A549 (cell line): ENCODE measurements at regions of chr17 and their contacts with region 1.

Region 1: DNA sequence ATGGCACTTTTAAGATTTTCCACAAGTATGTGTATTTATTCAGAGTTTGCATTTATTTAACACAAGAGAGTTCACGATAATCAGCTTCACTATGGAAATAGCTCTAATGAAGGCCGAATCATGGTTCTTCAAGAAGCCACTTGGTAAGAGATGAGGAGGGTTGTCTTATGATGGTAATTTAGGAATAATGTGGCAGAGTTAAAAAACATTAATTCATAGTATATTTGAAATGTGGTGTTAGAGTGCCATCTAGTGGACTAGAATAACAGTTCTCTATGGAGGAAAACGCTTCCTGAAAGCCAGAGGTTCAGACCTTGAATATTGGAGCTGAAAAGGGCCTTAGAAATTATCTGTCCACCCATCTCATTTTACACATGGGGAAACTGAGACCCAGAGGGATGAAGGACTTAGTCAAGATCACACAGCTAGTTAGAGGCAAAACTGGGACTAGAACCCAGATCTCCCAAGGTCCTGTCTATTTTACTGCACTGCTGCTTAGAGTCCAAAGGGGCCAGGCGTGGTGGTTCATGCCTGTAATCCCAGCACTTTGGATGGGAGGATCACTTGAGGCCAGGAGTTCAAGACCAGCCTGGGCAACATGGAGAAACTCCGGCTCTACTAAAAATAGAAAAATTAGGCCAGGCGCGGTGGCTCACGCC is 33.8 kb upstream of the KPNB1 start:
- DNase-seq: peak; percentile 41 to 66
- ATAC-seq: peak; percentile 62 to 76
- H3K4me3 ChIP-seq: no peak overlapping the region
- H3K27ac ChIP-seq: peak overlapping the region in 1 of 2 experiments; percentile 36; a peak in 1 of 6 replicates
- H3K4me1 ChIP-seq: peaks cover 35% of the 10 kb centered on the region
- CTCF ChIP-seq: peak; percentile 96
- EP300 ChIP-seq: no peak
- POLR2A ChIP-seq: no peak
- RAD21 ChIP-seq: peak; percentile 86 to 91

Region 2: GRCh38 chr17:47604598-47604927 is 11.3 kb before region 1 on chr17:
- CTCF ChIA-PET with region 1: interaction called, 47 read pairs
- POLR2A ChIA-PET with region 1: no interaction called
- DNase-seq: no peak
- ATAC-seq: no peak
- H3K4me3 ChIP-seq: no peak overlapping the region
- H3K27ac ChIP-seq: no peak overlapping the region
- H3K4me1 ChIP-seq: peaks cover 2% of the 10 kb centered on the region; the same call in 1 of the 3 replicates
- CTCF ChIP-seq: no peak
- EP300 ChIP-seq: no peak
- POLR2A ChIP-seq: no peak
- RAD21 ChIP-seq: no peak

Region 3: DNA sequence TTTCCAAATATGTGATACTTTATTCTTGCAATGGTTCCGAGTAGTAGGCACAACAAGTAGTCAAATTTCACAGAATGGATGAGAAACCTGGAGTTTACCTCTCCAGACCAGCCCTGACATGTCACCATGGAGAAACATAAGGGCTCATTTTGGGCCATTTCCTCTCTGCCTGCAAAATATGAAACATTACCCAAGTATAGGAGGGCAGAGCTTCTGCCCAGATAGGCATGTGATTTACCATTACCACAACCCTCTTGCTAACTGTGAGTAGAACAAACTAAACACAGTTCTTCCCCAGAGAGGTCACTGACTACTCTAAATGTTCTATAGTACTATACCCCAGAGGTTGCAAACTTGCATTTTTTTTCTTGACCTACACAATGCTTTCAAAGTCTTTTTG is 18.1 kb after region 1 on chr17:
- CTCF ChIA-PET with region 1: interaction called, 64 read pairs
- POLR2A ChIA-PET with region 1: no interaction called
- DNase-seq: no peak
- ATAC-seq: no peak
- H3K4me3 ChIP-seq: no peak overlapping the region
- H3K27ac ChIP-seq: no peak overlapping the region
- H3K4me1 ChIP-seq: no peaks in the 10 kb centered on the region
- CTCF ChIP-seq: no peak
- EP300 ChIP-seq: no peak
- POLR2A ChIP-seq: no peak
- RAD21 ChIP-seq: no peak

Region 4: DNA sequence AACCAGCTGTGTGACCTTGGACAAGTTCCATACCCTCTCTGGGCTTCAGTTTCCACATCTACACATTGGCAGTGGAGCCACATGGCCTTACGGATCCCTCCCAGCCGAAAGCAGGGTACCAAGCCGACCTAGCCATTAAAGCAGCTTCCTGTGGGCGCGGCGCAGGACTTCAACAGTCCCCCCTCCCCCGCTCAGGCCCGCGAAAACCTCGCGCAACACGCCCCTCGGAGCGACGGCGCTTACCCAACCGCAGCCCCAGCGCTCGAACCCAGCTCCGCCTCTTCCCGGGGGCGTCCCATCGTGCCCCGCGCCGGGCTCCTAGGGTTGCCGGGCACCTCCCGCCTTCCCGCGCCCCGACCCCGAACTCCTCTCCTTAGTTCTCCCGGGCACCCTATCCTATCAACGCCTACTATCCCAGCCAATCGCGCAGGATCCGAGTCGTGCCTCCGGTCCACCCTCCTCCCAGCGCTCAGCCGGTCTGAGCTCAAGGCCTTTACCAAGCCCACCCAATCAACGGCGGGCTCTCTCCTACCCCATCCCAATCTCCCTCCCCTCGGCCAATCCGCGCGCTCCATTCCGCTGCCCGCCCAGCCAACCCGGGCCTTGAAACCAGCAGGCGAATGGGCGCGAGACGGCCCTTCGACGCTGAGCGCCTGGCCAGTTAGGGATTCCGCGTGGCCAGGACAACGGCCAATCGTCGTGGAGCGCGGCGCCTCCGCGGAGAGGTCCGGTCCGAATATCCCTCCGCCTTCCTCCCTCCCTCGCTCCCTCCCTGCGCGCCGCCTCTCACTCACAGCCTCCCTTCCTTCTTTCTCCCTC is 33.5 kb after region 1 on chr17 and contains the start of gene KPNB1:
- CTCF ChIA-PET with region 1: interaction called, 19 read pairs
- POLR2A ChIA-PET with region 1: interaction called, 18 read pairs
- DNase-seq: peak; percentile 97 to 100
- ATAC-seq: peak; percentile 87 to 93
- H3K4me3 ChIP-seq: peak within 1 kb of the TSS; percentile 69
- H3K27ac ChIP-seq: peak within 1 kb of the TSS; percentile 92 to 95
- H3K4me1 ChIP-seq: peaks cover 37% of the 10 kb centered on the region
- CTCF ChIP-seq: no peak
- EP300 ChIP-seq: no peak
- POLR2A ChIP-seq: peak; percentile 71
- RAD21 ChIP-seq: 0 out of 5 replicates have a peak, but pooled peaks of 1 of the 2 experiments have one; percentile 7
- polyA plus RNA-seq, gene KPNB1: 358 and 452 TPM in 2 replicates